ENCODE measurements at regions of chr19 and their contacts with region 1.

Region 1: GRCh38 chr19:17996826-17997316 is 11.1 kb upstream of the ARRDC2 start:
- DNase-seq: peak; percentile 94

Region 2: GRCh38 chr19:17847538-17848366 is 149.1 kb before region 1 on chr19 and contains the start of gene JAK3:
- intact Hi-C with region 1: no loop called
- DNase-seq: peak; percentile 91
- total RNA-seq, gene JAK3: 6.2 TPM

Region 3: GRCh38 chr19:17889609-17890214 is 107.2 kb before region 1 on chr19:
- intact Hi-C with region 1: no loop called
- DNase-seq: no peak

Region 4: DNA sequence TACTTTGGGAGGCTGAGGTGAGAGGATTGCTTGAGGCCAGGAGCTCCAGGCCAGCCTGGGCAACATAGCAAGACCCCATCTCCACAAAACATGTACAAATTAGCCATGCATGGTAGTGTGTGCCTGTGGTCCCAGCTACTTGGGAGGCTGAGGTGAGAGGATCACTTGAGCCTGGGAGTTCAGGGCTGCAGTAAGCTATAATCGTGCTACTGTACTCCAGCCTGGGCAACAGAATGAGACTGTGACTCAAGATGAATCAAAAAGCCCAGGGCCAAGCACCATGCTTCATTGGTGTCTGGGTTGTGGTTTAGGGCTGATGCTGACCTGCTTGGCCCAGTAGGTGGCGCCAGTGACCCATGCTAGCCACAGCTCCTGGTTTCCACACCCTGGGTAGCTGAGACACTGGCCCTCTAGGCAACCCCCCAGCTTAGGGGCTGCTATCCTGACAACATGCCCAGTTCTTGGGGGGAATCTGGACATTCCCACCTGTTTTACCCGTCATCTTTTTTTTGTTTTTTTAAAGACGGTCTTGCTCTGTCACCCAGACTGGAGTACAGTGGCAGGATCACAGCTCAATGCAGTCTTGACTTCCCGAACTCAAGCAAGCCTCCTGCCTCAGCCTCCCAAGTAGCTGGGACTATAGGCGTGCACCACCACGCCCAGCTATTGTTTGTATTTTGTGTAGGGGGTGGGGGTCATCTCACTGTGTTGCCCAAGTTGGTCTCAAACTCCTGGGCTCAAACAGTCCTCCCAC is 58.6 kb before region 1 on chr19:
- intact Hi-C with region 1: loop called (anchors 1 kb)
- DNase-seq: peak; percentile 92

Region 5: GRCh38 chr19:17947815-17948513 is 48.9 kb before region 1 on chr19:
- intact Hi-C with region 1: loop called (anchors 2 kb)
- DNase-seq: peak; percentile 95

Region 6: GRCh38 chr19:18131841-18132596 is 135.1 kb after region 1 on chr19:
- intact Hi-C with region 1: no loop called
- DNase-seq: no peak

Measured in cardiac septum (tissue), 1 donor.